Dorsolateral prefrontal cortex (tissue), 120 donors: ENCODE measurements at regions of chr4 and their contacts with region 1.

Region 1: GRCh38 chr4:25862411-25863346 is at the start of gene SEL1L3:
- DNase-seq: peak in 4 of 10 donors; percentile 50 to 64 (median 52)
- H3K4me3 ChIP-seq: peak within 1 kb of the TSS; percentile 48 to 85 (median 71)
- H3K27ac ChIP-seq: peak within 1 kb of the TSS in 33 of 59 donors; percentile 10 to 87 (median 46)
- H3K27me3 ChIP-seq: no peaks in the 10 kb centered on the region
- CTCF ChIP-seq: no peak
- total RNA-seq, gene SEL1L3: 7.0 to 41.8 (median 19.4) TPM

Region 2: DNA sequence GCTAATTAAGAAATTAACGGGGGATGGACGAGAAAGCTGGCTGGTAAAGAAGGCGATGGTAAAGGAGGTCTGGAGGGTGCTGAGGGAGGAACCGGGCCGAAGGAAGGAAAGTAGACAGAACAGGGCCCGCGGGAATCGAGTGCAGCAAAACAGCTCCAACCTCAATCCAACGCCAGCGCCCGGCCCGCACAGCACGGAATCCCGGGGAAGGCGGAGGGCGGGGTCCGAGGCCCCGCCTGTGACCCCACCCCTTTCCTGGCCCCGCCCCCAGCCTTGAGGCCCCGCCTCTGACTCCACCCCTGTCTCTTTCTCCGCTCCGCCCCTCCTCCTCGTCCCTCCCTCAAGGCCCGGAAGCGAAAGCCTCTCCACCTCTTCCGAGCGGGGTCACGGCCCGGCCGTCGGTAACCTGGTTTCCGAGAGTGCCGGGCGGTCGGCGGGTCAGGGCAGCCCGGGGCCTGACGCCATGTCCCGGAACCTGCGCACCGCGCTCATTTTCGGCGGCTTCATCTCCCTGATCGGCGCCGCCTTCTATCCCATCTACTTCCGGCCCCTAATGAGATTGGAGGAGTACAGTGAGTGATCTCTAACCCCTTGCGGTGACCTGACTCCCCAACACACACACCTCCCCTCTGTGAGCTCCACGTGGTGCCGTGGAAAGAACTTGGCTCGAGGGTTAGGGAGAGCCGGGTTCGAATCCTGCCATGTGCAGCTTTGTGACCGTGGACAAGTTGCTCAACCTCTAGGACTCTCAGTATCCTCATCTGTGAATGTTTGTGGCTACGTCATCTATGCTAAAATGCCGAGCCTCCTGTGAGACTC is 51.4 kb after region 1 on chr4 and contains the start of gene SMIM20:
- intact Hi-C with region 1: loop called in 1 of 2 experiments (anchors 5 kb)
- DNase-seq: peak; percentile 85 to 96 (median 94)
- H3K4me3 ChIP-seq: peak within 1 kb of the TSS; percentile 51 to 98 (median 81)
- H3K27ac ChIP-seq: peak within 1 kb of the TSS; percentile 27 to 92 (median 83)
- H3K27me3 ChIP-seq: no peaks in the 10 kb centered on the region
- CTCF ChIP-seq: peak in 11 of 56 donors; percentile 4 to 39 (median 19)
- total RNA-seq, gene SMIM20: 13.4 to 30.6 (median 19.7) TPM